ENCODE measurements at regions of chr9 and their contacts with region 1.

Region 1: GRCh38 chr9:16787724-16788123 is 82.7 kb downstream of the BNC2 start:
- DNase-seq: no peak
- H3K4me3 ChIP-seq: no peak overlapping the region
- H3K27ac ChIP-seq: no peak overlapping the region
- H3K4me1 ChIP-seq: no peaks in the 10 kb centered on the region
- H3K27me3 ChIP-seq: no peaks in the 10 kb centered on the region
- CTCF ChIP-seq: no peak

Region 2: GRCh38 chr9:16304301-16304700 is 483.4 kb before region 1 on chr9:
- CTCF ChIA-PET with region 1: no interaction called
- POLR2A ChIA-PET with region 1: no interaction called
- intact Hi-C with region 1: no loop called
- DNase-seq: no peak
- H3K4me3 ChIP-seq: no peak overlapping the region
- H3K27ac ChIP-seq: no peak overlapping the region
- H3K4me1 ChIP-seq: no peaks in the 10 kb centered on the region
- H3K27me3 ChIP-seq: no peaks in the 10 kb centered on the region
- CTCF ChIP-seq: no peak

Region 3: GRCh38 chr9:16732546-16732945 is 55.2 kb before region 1 on chr9:
- CTCF ChIA-PET with region 1: no interaction called
- POLR2A ChIA-PET with region 1: no interaction called
- intact Hi-C with region 1: no loop called
- DNase-seq: no peak
- H3K4me3 ChIP-seq: no peak overlapping the region
- H3K27ac ChIP-seq: no peak overlapping the region
- H3K4me1 ChIP-seq: no peaks in the 10 kb centered on the region
- H3K27me3 ChIP-seq: peaks cover 2% of the 10 kb centered on the region
- CTCF ChIP-seq: no peak

Region 4: DNA sequence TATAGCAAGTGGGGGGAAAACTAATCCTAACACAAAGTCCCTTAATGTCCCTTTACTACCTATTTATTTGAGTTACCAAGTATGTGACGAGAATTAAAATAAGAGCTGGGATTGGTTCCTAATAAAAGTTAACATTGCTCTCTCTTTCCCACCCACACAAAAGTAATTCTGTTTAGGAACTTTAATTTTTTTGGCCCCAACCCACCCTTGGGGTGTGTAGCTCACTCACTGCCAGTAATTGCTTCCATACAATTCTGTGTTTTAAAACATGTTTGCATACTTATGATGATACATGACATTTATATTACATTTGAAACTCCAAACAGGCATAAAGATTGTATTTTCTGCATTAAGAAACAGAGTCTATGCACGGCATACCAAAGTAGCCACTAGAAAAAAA is 23.8 kb before region 1 on chr9:
- CTCF ChIA-PET with region 1: no interaction called
- POLR2A ChIA-PET with region 1: interaction called, 18 read pairs
- intact Hi-C with region 1: no loop called
- DNase-seq: no peak
- H3K4me3 ChIP-seq: no peak overlapping the region
- H3K27ac ChIP-seq: no peak overlapping the region
- H3K4me1 ChIP-seq: no peaks in the 10 kb centered on the region
- H3K27me3 ChIP-seq: no peaks in the 10 kb centered on the region
- CTCF ChIP-seq: no peak

Region 5: GRCh38 chr9:17422994-17423680 is 635.4 kb after region 1 on chr9:
- CTCF ChIA-PET with region 1: no interaction called
- POLR2A ChIA-PET with region 1: no interaction called
- intact Hi-C with region 1: no loop called
- DNase-seq: no peak
- H3K4me3 ChIP-seq: no peak overlapping the region
- H3K27ac ChIP-seq: no peak overlapping the region
- H3K4me1 ChIP-seq: no peaks in the 10 kb centered on the region
- H3K27me3 ChIP-seq: no peaks in the 10 kb centered on the region
- CTCF ChIP-seq: no peak